Activated CD4-positive, alpha-beta T cell treated with anti-CD3 and anti-CD28 coated beads, Interleukin-2, amount 10 ng/mL, durations not matched to agents 24 days and 14 days (primary cell): ENCODE measurements at regions of chr2 and their contacts with region 1.

Region 1: GRCh38 chr2:237923481-237924163 is 43.2 kb upstream of the UBE2F start:
- DNase-seq: peak; percentile 95
- H3K4me3 Mint-ChIP-seq: peak overlapping the region; percentile 66
- H3K27ac Mint-ChIP-seq: peak overlapping the region; percentile 86
- H3K4me1 Mint-ChIP-seq: peaks cover 37% of the 10 kb centered on the region
- H3K27me3 Mint-ChIP-seq: no peaks in the 10 kb centered on the region

Region 2: GRCh38 chr2:237904801-237905599 is 18.6 kb before region 1 on chr2:
- intact Hi-C with region 1: loop called (anchors 2 kb)
- DNase-seq: peak; percentile 72
- H3K4me3 Mint-ChIP-seq: peak overlapping the region; percentile 74
- H3K27ac Mint-ChIP-seq: peak overlapping the region; percentile 94
- H3K4me1 Mint-ChIP-seq: peaks cover 40% of the 10 kb centered on the region
- H3K27me3 Mint-ChIP-seq: no peaks in the 10 kb centered on the region

Region 3: DNA sequence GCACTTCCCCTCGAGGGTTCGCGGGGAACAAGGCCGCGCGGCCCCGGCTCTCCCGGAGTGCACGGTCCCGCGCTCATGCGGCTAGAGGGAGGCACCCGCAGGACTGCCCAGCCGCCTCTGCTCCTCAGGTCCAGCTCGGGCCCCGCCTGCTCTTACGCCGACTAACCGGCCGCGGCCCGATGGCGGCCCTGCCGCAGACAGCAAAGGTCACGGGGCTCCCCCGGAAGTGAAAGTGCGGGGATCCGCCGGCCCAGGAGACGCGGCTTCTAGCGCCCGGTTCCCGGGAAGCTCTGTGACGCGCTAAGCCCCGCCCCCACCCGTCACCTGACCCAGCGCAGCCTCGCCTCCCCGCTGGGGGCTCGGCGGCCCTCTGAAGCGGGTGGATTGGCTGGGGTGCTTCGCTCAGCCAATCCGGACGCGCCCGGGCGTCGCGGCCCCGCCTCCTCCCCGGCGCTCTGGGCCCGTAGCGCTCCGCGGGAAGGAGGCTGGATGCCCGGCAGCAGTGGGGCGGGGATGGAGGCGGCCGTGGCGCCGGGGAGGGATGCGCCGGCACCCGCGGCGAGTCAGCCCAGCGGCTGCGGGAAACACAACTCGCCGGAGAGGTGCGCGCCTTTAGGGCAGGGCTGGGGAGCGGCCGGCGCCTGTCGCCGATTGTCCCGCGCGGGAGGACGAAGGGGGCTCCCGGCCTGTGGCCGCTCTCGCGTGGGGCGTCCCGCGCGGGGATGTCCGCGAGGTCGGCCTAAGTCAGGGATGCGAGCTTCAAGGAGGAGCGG is 137.1 kb after region 1 on chr2 and contains the start of gene SCLY:
- intact Hi-C with region 1: loop called (anchors 5 kb)
- DNase-seq: peak; percentile 98
- H3K4me3 Mint-ChIP-seq: peak within 1 kb of the TSS; percentile 91
- H3K27ac Mint-ChIP-seq: peak within 1 kb of the TSS; percentile 95
- H3K4me1 Mint-ChIP-seq: peaks cover 44% of the 10 kb centered on the region
- H3K27me3 Mint-ChIP-seq: peaks cover 6% of the 10 kb centered on the region
- total RNA-seq, gene SCLY: 109 TPM in 2 replicates

Region 4: GRCh38 chr2:238108423-238109183 is 185.0 kb after region 1 on chr2:
- intact Hi-C with region 1: no loop called
- DNase-seq: peak; percentile 77
- H3K4me3 Mint-ChIP-seq: no peak overlapping the region
- H3K27ac Mint-ChIP-seq: no peak overlapping the region
- H3K4me1 Mint-ChIP-seq: peaks cover 11% of the 10 kb centered on the region
- H3K27me3 Mint-ChIP-seq: no peaks in the 10 kb centered on the region